Keratinocyte (primary cell): ENCODE measurements at regions of chrX and their contacts with region 1.

Region 1: GRCh38 chrX:138191998-138192397 is 519.5 kb downstream of the FGF13 start:
- DNase-seq: no peak
- H3K4me3 ChIP-seq: no peak overlapping the region
- H3K27ac ChIP-seq: no peak overlapping the region
- H3K4me1 ChIP-seq: no peaks in the 10 kb centered on the region
- H3K27me3 ChIP-seq: no peaks in the 10 kb centered on the region
- CTCF ChIP-seq: peak; percentile 11 to 51 (median 40)

Region 2: GRCh38 chrX:137387646-137388045 is 804.4 kb before region 1 on chrX:
- dilution Hi-C with region 1: no loop called
- DNase-seq: no peak
- H3K4me3 ChIP-seq: no peak overlapping the region
- H3K27ac ChIP-seq: no peak overlapping the region
- H3K4me1 ChIP-seq: no peaks in the 10 kb centered on the region
- H3K27me3 ChIP-seq: no peaks in the 10 kb centered on the region
- CTCF ChIP-seq: no peak

Region 3: DNA sequence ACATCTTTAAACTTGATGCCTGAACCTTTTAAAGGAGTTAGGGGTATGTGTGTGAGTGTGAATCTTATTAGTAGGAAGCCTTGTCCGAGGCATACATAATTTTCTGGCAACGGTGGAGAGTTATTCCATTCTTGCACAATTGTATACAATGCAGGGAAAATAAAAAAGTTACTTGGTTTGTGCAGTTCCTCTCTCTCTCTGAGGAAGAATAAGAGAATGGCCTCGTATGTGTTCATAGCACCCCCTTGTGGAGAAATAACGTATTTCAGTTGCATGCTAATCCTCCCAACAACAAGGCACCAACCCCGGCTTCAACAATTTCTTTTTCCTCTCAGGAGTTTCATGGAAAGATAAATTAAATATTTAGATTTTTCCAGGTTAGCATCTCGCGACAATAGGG is 553.2 kb after region 1 on chrX:
- dilution Hi-C with region 1: loop called (anchors 25 kb)
- DNase-seq: peak; percentile 17
- H3K4me3 ChIP-seq: no peak overlapping the region
- H3K27ac ChIP-seq: no peak overlapping the region
- H3K4me1 ChIP-seq: no peaks in the 10 kb centered on the region
- H3K27me3 ChIP-seq: no peaks in the 10 kb centered on the region
- CTCF ChIP-seq: peak; percentile 55 to 71 (median 57)